ENCODE measurements at regions of chr4 and their contacts with region 1.

Region 1: DNA sequence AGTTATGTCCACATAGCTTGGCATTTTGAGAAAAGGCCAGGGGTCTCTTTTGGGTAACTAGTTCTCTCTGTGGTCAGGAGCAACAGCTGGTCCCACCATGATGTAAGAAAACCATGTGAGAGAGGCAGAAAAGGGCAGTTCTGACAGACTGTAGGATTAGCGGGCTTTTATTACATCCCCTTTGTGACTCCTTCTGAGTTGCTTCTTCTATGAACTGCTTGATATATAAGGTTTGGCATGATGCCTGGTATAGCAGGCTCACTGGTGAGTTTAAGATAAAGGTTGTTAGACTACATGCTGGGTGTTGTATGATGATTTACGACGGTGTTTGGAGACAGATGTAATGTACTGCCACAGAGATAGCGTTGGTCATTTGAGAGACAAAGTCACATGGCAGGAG is 2308.1 kb upstream of the AGA start:
- DNase-seq: no peak
- H3K4me3 ChIP-seq: no peak overlapping the region
- H3K27ac ChIP-seq: no peak overlapping the region
- H3K4me1 ChIP-seq: no peaks in the 10 kb centered on the region
- H3K27me3 ChIP-seq: no peaks in the 10 kb centered on the region
- CTCF ChIP-seq: no peak
- POLR2A ChIP-seq: no peak

Region 2: DNA sequence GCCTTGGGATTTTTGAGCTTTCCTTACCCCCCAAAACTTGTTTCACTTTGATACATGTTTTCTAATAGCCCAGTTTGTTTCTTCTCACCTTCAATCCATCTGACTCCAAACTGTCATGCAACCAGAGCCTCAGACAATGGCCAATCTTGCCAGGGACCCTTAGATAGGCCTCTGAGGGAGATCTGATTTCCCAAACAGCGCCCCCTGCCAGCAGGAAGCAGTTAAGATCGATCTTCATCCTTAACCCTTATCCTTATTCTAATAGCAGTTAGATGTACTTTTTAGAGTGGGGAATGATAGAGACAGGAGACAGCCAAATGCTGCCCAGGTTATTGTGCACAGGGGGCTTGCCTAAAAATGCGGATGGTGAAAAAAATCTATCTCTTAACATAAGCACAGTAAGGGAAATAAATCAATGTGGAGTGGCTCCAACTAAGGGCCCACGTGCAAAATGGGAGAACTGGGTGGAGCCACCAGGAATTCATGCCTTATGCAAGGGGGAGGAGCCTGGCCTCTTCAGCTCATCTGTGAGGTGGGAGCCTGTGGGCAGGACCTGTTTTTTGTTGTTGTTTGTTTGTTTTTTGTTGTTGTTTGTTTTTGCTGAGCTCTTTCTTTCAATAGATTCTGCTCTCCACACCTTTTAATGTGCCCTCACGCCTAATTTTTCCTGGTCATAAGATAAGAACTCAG is 1474.6 kb before region 1 on chr4:
- intact Hi-C with region 1: loop called (anchors 10 kb)
- DNase-seq: no peak
- H3K4me3 ChIP-seq: no peak overlapping the region
- H3K27ac ChIP-seq: no peak overlapping the region
- H3K4me1 ChIP-seq: no peaks in the 10 kb centered on the region
- H3K27me3 ChIP-seq: no peaks in the 10 kb centered on the region
- CTCF ChIP-seq: no peak
- POLR2A ChIP-seq: no peak

Measured in breast epithelium (tissue), 4 donors.